HEK293T (cell line): ENCODE measurements at regions of chr12 and their contacts with region 1.

Region 1: DNA sequence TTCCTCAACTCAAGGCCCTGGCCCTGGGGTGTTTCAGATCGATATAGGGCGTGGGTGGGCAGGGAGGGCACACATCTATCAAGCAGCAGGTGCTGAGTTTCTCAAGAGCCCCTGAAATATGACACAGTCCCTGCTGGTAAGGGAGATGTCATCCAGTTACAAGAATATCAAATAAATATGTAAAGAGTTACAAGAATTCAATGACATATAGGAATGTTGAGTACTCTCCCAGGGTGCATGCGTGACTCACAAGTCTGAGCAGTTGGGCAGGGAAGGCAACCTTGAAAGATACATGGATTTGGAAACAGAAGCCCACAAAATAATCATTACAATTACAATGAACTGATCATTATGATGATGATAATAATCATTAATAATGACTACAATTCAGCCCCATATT is 35.2 kb downstream of the MVK start:
- DNase-seq: no peak

Region 2: DNA sequence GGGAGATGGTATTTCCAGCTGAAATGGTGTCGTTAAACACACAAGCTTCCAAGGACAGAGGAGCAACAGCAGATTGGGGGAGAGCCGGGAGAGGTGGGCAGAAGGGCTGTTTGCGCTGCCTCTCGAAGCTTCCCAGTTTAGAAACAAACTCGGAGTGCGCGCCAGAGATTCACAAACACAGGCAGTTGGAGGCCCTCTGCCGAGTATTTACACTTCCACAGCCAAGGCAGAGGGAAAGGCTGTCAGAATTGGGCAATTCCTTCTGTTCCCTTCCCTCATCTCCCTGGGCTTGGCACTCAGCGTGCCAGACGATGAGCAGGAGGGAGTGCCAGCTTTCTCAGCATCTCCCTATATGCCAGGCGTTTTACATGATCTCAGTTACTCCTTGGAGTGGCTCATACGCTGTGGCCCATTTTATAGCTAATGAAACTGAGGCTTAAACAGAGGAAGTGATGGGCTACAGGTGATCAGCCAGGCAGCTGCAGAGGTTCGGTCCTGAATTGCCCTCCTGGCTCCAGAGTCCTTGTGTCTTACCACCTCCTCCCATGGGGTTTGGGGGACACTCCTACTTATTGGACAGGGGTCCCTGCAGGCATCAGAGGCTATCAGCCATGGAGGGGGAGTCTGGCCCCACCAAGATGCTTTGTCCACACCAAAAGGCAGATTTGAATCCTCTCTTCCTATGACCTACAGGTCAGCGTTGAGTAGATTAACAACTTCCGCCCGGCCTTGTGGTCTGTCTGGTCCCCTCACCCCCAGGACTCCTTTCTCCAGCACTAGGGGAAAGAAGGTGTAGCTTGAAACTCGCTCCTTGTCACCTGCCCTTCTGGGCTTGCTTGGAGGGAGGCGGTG is 107.9 kb after region 1 on chr12:
- CTCF ChIA-PET with region 1: interaction called, 11 read pairs
- POLR2A ChIA-PET with region 1: no interaction called
- DNase-seq: no peak